GM12878 (cell line): ENCODE measurements at regions of chr6 and their contacts with region 1.

Region 1: GRCh38 chr6:111483736-111484632 is 966 bp upstream of the REV3L start:
- DNase-seq: peak; percentile 69
- ATAC-seq: peak; percentile 69
- H3K4me3 ChIP-seq: peak overlapping the region; percentile 88
- H3K27ac ChIP-seq: peak overlapping the region; percentile 98
- H3K4me1 ChIP-seq: peaks cover 17% of the 10 kb centered on the region
- H3K27me3 ChIP-seq: no peaks in the 10 kb centered on the region
- CTCF ChIP-seq: no peak
- EP300 ChIP-seq: peak; percentile 16 to 34; a peak in 1 of 4 replicates
- POLR2A ChIP-seq: peak; percentile 92
- RAD21 ChIP-seq: no peak

Region 2: GRCh38 chr6:111406200-111406721 is 77.7 kb before region 1 on chr6:
- CTCF ChIA-PET with region 1: interaction called, 20 read pairs
- POLR2A ChIA-PET with region 1: interaction called, 15 read pairs
- RAD21 ChIA-PET with region 1: interaction called, 62 read pairs
- SMC1A ChIA-PET with region 1: interaction called, 49 read pairs
- in situ Hi-C with region 1: no loop called
- intact Hi-C with region 1: loop called (anchors 5 kb)
- DNase-seq: peak; percentile 96
- ATAC-seq: peak; percentile 94
- H3K4me3 ChIP-seq: no peak overlapping the region
- H3K27ac ChIP-seq: peak overlapping the region; percentile 59
- H3K4me1 ChIP-seq: peaks cover 28% of the 10 kb centered on the region
- H3K27me3 ChIP-seq: no peaks in the 10 kb centered on the region
- CTCF ChIP-seq: no peak
- EP300 ChIP-seq: peak; percentile 98 to 100; a peak in 3 of 4 replicates
- POLR2A ChIP-seq: no peak
- RAD21 ChIP-seq: peak; percentile 37; the same call in 1 of the 2 replicates

Region 3: DNA sequence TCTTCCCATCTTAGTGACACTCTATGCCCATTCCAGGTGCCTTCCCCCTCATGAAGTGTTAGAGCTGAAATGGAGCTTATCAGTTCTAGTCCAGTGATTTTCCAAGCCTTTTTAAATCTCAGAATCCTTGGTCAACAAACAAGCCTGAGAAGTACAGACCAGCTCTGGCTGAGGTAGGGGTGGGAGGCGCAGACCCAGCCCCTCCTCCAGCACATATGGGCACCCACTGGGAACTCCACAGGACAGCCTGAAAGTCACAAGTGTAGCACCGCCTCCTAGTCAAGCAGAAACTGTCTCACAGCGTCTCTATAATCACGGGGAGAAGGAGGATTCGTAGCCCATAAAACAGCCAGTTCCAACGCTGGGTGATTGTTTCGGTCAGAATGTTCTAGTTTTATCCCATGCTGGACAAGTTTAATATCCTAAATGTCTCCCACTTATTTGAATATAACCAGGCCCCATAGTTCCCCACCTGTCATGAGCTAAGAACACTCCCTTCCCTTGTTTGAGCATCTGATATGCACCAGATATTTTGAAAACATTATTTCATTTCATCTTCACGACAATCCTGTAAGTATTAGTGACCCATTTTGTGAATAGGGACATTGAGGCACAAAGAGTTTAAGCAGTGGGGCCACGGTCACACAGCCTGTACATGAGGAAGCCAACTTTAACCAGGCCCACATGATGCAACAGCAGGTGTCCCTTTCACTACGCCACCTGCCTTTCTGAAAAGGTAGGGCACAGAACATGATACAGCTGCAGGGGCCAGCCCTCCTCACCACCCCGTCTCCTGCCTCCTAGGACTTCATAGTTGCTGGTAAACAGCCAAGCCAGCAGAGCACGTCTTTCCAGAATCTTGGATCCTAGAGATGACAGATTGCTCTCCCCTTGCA is 81.6 kb after region 1 on chr6:
- CTCF ChIA-PET with region 1: interaction called, 14 read pairs
- POLR2A ChIA-PET with region 1: interaction called, 5 read pairs
- RAD21 ChIA-PET with region 1: interaction called, 11 read pairs
- SMC1A ChIA-PET with region 1: interaction called, 12 read pairs
- in situ Hi-C with region 1: no loop called
- intact Hi-C with region 1: no loop called
- DNase-seq: no peak
- ATAC-seq: peak; percentile 96
- H3K4me3 ChIP-seq: no peak overlapping the region
- H3K27ac ChIP-seq: peak overlapping the region; percentile 53
- H3K4me1 ChIP-seq: peaks cover 15% of the 10 kb centered on the region
- H3K27me3 ChIP-seq: no peaks in the 10 kb centered on the region
- CTCF ChIP-seq: peak; percentile 41 to 47 (median 46); a peak in 5 of 6 replicates
- EP300 ChIP-seq: no peak
- POLR2A ChIP-seq: peak; percentile 50
- RAD21 ChIP-seq: peak; percentile 59

Region 4: DNA sequence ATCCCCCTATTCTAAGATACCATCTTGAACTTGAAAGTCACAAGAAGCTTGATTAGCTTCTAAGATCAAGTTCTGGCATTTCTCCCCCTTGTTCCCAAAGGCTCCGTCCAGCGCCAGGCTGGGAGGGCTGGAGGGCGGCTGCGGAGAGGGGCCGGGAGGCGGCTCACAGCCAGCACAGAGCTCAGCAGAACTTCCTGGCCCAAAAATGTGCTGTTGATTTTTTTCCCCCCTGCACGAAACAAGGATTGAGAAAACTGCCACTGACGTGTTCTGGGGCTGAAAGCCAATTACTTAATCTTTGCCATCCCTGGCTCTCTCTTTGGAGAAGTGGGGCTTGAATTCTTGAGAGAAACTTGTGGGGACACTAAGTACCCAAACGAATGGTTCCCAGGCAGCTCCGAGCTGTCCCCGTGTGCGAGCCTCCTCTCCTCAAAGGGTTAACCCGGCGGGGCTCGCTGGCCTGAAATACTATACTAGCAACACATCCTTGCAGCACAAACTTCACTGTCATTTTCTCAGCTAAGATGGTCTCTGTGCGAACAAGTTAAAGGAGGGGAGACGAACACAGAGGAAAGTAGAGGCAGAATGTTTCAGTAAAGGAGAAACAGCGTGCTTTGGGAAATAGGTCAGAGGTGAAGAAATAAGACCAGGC is 121.2 kb after region 1 on chr6:
- CTCF ChIA-PET with region 1: interaction called, 9 read pairs
- POLR2A ChIA-PET with region 1: interaction called, 8 read pairs
- RAD21 ChIA-PET with region 1: interaction called, 30 read pairs
- SMC1A ChIA-PET with region 1: interaction called, 4 read pairs
- in situ Hi-C with region 1: no loop called
- intact Hi-C with region 1: loop called (anchors 2 kb)
- DNase-seq: no peak
- ATAC-seq: peak; percentile 65
- H3K4me3 ChIP-seq: peak overlapping the region; percentile 74
- H3K27ac ChIP-seq: peak overlapping the region; percentile 87
- H3K4me1 ChIP-seq: peaks cover 11% of the 10 kb centered on the region; the same call in 1 of the 2 replicates
- H3K27me3 ChIP-seq: no peaks in the 10 kb centered on the region
- CTCF ChIP-seq: no peak
- EP300 ChIP-seq: no peak
- POLR2A ChIP-seq: no peak
- RAD21 ChIP-seq: no peak

Region 5: GRCh38 chr6:111642463-111643158 is 158.6 kb after region 1 on chr6:
- CTCF ChIA-PET with region 1: interaction called, 6 read pairs
- POLR2A ChIA-PET with region 1: no interaction called
- RAD21 ChIA-PET with region 1: interaction called, 10 read pairs
- SMC1A ChIA-PET with region 1: interaction called, 4 read pairs
- in situ Hi-C with region 1: no loop called
- intact Hi-C with region 1: loop called (anchors 5 kb)
- DNase-seq: peak; percentile 21
- ATAC-seq: peak; percentile 95
- H3K4me3 ChIP-seq: no peak overlapping the region
- H3K27ac ChIP-seq: no peak overlapping the region
- H3K4me1 ChIP-seq: no peaks in the 10 kb centered on the region
- H3K27me3 ChIP-seq: no peaks in the 10 kb centered on the region
- CTCF ChIP-seq: peak; percentile 57 to 77 (median 65)
- EP300 ChIP-seq: no peak
- POLR2A ChIP-seq: no peak
- RAD21 ChIP-seq: peak; percentile 75